Activated T-helper 1 cell treated with anti-CD3 and anti-CD28 coated beads, Interleukin-12 subunit alpha, Interleukin-12 subunit beta, Interleukin-2, Interleukin-4 antibody, amounts not matched to agents 30 ng/mL and 10 ng/mL and 1 ng/mL, durations not matched to agents 14 hours and 24 hours and 36 hours (primary cell): ENCODE measurements at regions of chr12 and their contacts with region 1.

Region 1: DNA sequence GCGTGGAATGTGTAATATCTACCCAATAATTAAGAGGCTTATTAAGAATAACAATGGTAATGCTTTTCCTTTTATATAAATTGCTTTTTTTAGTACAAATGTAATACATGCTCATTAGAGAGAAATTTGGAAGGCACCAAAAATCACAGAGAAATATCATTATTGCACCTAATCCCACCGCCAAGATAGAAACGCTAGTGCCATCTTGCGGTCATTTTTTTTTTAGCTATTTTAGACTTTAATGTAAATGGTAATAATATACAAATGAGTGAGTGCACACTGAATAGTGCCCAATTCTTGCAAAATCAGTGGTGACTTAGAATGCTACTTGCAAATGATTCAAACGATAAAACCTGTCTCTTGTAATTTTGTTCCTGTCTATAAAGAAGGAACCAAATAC is 576.8 kb upstream of the TMEM132C start:
- DNase-seq: no peak
- H3K4me3 Mint-ChIP-seq: no peak overlapping the region
- H3K27ac Mint-ChIP-seq: no peak overlapping the region
- H3K4me1 Mint-ChIP-seq: no peaks in the 10 kb centered on the region
- H3K27me3 Mint-ChIP-seq: no peaks in the 10 kb centered on the region

Region 2: DNA sequence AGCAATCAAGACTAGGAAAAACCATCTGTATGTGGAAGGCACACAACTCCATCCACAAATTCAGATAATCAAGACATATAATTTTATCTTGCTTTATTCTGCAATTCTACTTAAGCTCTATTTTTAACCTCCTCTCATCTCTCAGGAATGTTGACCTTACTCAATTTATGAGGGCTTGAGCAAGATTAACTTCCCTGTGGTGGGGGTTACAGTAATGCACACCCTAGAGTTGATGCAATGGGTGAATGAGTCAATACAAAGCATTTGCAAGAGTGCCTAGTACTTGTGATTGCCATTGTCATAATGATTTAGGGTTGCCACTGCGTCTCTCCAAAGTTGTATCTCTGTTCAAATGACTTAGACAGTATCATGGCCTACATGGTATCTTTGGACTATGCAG is 1021.6 kb before region 1 on chr12:
- intact Hi-C with region 1: no loop called
- DNase-seq: no peak
- H3K4me3 Mint-ChIP-seq: no peak overlapping the region
- H3K27ac Mint-ChIP-seq: no peak overlapping the region
- H3K4me1 Mint-ChIP-seq: no peaks in the 10 kb centered on the region
- H3K27me3 Mint-ChIP-seq: no peaks in the 10 kb centered on the region

Region 3: GRCh38 chr12:127485528-127485927 is 204.6 kb before region 1 on chr12:
- intact Hi-C with region 1: loop called (anchors 5 kb)
- DNase-seq: peak; percentile 48
- H3K4me3 Mint-ChIP-seq: no peak overlapping the region
- H3K27ac Mint-ChIP-seq: no peak overlapping the region
- H3K4me1 Mint-ChIP-seq: peaks cover 14% of the 10 kb centered on the region
- H3K27me3 Mint-ChIP-seq: no peaks in the 10 kb centered on the region